MCF 10A (cell line): ENCODE measurements at regions of chr14 and their contacts with region 1.

Region 1: DNA sequence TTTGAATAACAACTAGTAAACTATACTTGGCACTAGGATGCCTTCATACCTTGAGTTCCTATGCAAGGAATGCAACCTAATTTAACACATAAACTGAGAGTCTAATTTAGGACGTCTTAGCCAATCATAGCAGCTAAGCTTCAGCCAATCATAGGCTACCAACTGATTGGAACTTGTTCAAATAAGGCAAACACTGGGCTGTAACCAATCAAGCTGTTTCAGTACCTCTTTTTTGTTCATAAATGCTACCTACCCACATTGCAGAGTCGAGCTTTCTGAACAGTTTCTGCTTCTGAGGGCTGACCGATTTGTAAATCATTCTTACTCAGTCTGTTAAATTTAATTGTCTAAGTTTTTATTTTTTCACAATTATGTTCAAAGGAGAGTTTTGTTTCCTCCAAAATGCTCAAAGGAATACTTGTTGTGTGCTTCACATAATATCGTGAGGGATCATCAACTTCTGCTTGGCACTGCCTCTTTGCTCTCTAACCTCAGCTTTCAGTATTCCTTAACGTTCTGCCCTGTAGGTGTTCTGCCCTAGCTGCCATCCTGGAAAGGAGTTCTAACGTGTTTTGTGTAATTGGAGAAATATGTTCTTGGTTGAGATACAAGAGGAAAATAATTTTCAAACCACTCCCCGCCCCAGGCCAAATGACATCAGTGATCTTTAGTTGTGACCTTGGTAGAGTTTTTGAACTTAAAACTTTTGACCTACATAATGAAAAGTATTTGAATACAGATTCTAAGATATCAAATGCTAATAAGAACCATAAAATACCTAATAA is 380.4 kb upstream of the MIS18BP1 start:
- DNase-seq: no peak
- H3K4me3 Mint-ChIP-seq: peak overlapping the region; percentile 15
- H3K27ac Mint-ChIP-seq: peak overlapping the region; percentile 66
- H3K4me1 Mint-ChIP-seq: peaks cover 13% of the 10 kb centered on the region
- H3K27me3 Mint-ChIP-seq: no peaks in the 10 kb centered on the region
- CTCF ChIP-seq: no peak

Region 2: GRCh38 chr14:45766247-45766646 is 132.8 kb after region 1 on chr14:
- CTCF ChIA-PET with region 1: no interaction called
- POLR2A ChIA-PET with region 1: no interaction called
- intact Hi-C with region 1: loop called (anchors 10 kb)
- DNase-seq: no peak
- H3K4me3 Mint-ChIP-seq: no peak overlapping the region
- H3K27ac Mint-ChIP-seq: no peak overlapping the region
- H3K4me1 Mint-ChIP-seq: no peaks in the 10 kb centered on the region
- H3K27me3 Mint-ChIP-seq: no peaks in the 10 kb centered on the region
- CTCF ChIP-seq: no peak